Heart left ventricle (tissue), 16 donors: ENCODE measurements at regions of chr9 and their contacts with region 1.

Region 1: GRCh38 chr9:93223260-93224180 is 39.6 kb downstream of the WNK2 start:
- DNase-seq: peak; percentile 21 to 72 (median 56)
- ATAC-seq: peak; percentile 70 to 77 (median 74)
- H3K4me3 ChIP-seq: no peak overlapping the region
- H3K27ac ChIP-seq: peak overlapping the region in 9 of 12 donors; percentile 9 to 68 (median 53)
- H3K4me1 ChIP-seq: peaks cover 0 to 88% (median 33%) of the 10 kb centered on the region in 12 donors
- H3K27me3 ChIP-seq: peaks cover 0 to 3% (median 0%) of the 10 kb centered on the region in 9 donors
- CTCF ChIP-seq: no peak
- POLR2A ChIP-seq: no peak

Region 2: GRCh38 chr9:93159601-93160471 is 63.7 kb before region 1 on chr9:
- intact Hi-C with region 1: loop called in 1 of 10 experiments (anchors 5 kb)
- DNase-seq: peak; percentile 78 to 91 (median 86)
- ATAC-seq: peak; percentile 80 to 92 (median 90)
- H3K4me3 ChIP-seq: no peak overlapping the region
- H3K27ac ChIP-seq: no peak overlapping the region
- H3K4me1 ChIP-seq: peaks cover 0 to 29% (median 12%) of the 10 kb centered on the region in 12 donors
- H3K27me3 ChIP-seq: no peaks in the 10 kb centered on the region
- CTCF ChIP-seq: peak; percentile 85 to 98 (median 95)
- POLR2A ChIP-seq: no peak

Region 3: GRCh38 chr9:93329632-93330315 is 106.3 kb after region 1 on chr9:
- intact Hi-C with region 1: no loop called
- DNase-seq: no peak
- ATAC-seq: no peak
- H3K4me3 ChIP-seq: no peak overlapping the region
- H3K27ac ChIP-seq: no peak overlapping the region
- H3K4me1 ChIP-seq: no peaks in the 10 kb centered on the region
- H3K27me3 ChIP-seq: no peaks in the 10 kb centered on the region
- CTCF ChIP-seq: no peak
- POLR2A ChIP-seq: no peak